ENCODE measurements at regions of chr2 and their contacts with region 1.

Region 1: GRCh38 chr2:101012706-101013181 is 10.7 kb downstream of the RPL31 start:
- DNase-seq: no peak
- ATAC-seq: no peak
- H3K4me3 ChIP-seq: no peak overlapping the region
- H3K27ac ChIP-seq: peak overlapping the region; percentile 83
- H3K4me1 ChIP-seq: peaks cover 17% of the 10 kb centered on the region
- H3K27me3 ChIP-seq: no peaks in the 10 kb centered on the region
- CTCF ChIP-seq: peak; percentile 60 to 72 (median 71)
- EP300 ChIP-seq: no peak
- POLR2A ChIP-seq: no peak
- RAD21 ChIP-seq: peak; percentile 83

Region 2: GRCh38 chr2:101001691-101002561 is 10.8 kb before region 1 on chr2 and contains the start of gene RPL31:
- CTCF ChIA-PET with region 1: interaction called, 30 read pairs
- POLR2A ChIA-PET with region 1: interaction called, 6 read pairs
- RAD21 ChIA-PET with region 1: interaction called, 5 read pairs
- SMC1A ChIA-PET with region 1: interaction called, 13 read pairs
- in situ Hi-C with region 1: no loop called
- intact Hi-C with region 1: no loop called
- DNase-seq: peak; percentile 78
- ATAC-seq: peak; percentile 92
- H3K4me3 ChIP-seq: peak within 1 kb of the TSS; percentile 96
- H3K27ac ChIP-seq: peak within 1 kb of the TSS; percentile 97
- H3K4me1 ChIP-seq: peaks cover 12% of the 10 kb centered on the region
- H3K27me3 ChIP-seq: no peaks in the 10 kb centered on the region; a peak in 1 of 4 replicates
- CTCF ChIP-seq: no peak
- EP300 ChIP-seq: no peak
- POLR2A ChIP-seq: peak; percentile 100
- RAD21 ChIP-seq: no peak
- polyA plus RNA-seq, gene RPL31: 5,836 to 8,551 TPM

Region 3: GRCh38 chr2:101064868-101065549 is 52.3 kb after region 1 on chr2:
- CTCF ChIA-PET with region 1: interaction called, 9 read pairs
- POLR2A ChIA-PET with region 1: no interaction called
- RAD21 ChIA-PET with region 1: interaction called, 14 read pairs
- SMC1A ChIA-PET with region 1: interaction called, 5 read pairs
- in situ Hi-C with region 1: no loop called
- intact Hi-C with region 1: loop called (anchors 1 kb)
- DNase-seq: no peak
- ATAC-seq: peak; percentile 91
- H3K4me3 ChIP-seq: no peak overlapping the region
- H3K27ac ChIP-seq: peak overlapping the region; percentile 53
- H3K4me1 ChIP-seq: peaks cover 11% of the 10 kb centered on the region
- H3K27me3 ChIP-seq: no peaks in the 10 kb centered on the region
- CTCF ChIP-seq: no peak
- EP300 ChIP-seq: peak in 1 of 2 experiments; percentile 35; a peak in 2 of 4 replicates
- POLR2A ChIP-seq: no peak
- RAD21 ChIP-seq: no peak

Region 4: GRCh38 chr2:101205521-101205998 is 192.8 kb after region 1 on chr2:
- CTCF ChIA-PET with region 1: interaction called, 16 read pairs
- POLR2A ChIA-PET with region 1: no interaction called
- RAD21 ChIA-PET with region 1: interaction called, 13 read pairs
- SMC1A ChIA-PET with region 1: interaction called, 12 read pairs
- in situ Hi-C with region 1: no loop called
- intact Hi-C with region 1: loop called (anchors 2 kb)
- DNase-seq: no peak
- ATAC-seq: peak; percentile 71
- H3K4me3 ChIP-seq: no peak overlapping the region; the same call in 1 of the 2 replicates
- H3K27ac ChIP-seq: no peak overlapping the region
- H3K4me1 ChIP-seq: no peaks in the 10 kb centered on the region
- H3K27me3 ChIP-seq: no peaks in the 10 kb centered on the region; a peak in 1 of 4 replicates
- CTCF ChIP-seq: peak; percentile 30 to 52 (median 38); a peak in 4 of 6 replicates
- EP300 ChIP-seq: no peak
- POLR2A ChIP-seq: no peak
- RAD21 ChIP-seq: peak; percentile 44

Region 5: DNA sequence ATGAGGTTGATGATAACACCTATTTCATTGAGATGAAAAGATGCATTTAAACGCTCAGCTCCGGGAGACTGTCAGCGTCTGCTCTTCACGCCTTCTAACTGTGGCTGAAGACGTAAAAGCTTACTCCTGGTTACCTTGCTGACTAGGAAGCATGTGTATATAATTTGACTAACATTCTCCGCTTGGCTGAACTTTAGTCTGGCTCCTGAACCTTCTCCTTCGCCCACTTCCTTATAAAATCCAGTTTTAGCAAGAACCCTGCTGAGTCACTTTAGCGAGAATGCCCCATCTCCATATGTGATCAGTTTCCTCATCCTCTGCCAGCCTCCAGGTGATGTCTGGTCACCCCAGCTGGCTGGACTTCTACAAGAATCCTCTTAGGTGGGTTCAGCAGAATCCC is 387.3 kb after region 1 on chr2:
- CTCF ChIA-PET with region 1: no interaction called
- POLR2A ChIA-PET with region 1: no interaction called
- RAD21 ChIA-PET with region 1: no interaction called
- SMC1A ChIA-PET with region 1: no interaction called
- in situ Hi-C with region 1: no loop called
- intact Hi-C with region 1: loop called (anchors 10 kb)
- DNase-seq: no peak
- ATAC-seq: no peak
- H3K4me3 ChIP-seq: no peak overlapping the region
- H3K27ac ChIP-seq: no peak overlapping the region
- H3K4me1 ChIP-seq: no peaks in the 10 kb centered on the region
- H3K27me3 ChIP-seq: peaks cover 0 to 14% of the 10 kb centered on the region in 2 experiments; a peak in 2 of 4 replicates
- CTCF ChIP-seq: no peak
- EP300 ChIP-seq: no peak
- POLR2A ChIP-seq: no peak
- RAD21 ChIP-seq: no peak